Right cardiac atrium (tissue), 5 donors: ENCODE measurements at regions of chr10 and their contacts with region 1.

Region 1: DNA sequence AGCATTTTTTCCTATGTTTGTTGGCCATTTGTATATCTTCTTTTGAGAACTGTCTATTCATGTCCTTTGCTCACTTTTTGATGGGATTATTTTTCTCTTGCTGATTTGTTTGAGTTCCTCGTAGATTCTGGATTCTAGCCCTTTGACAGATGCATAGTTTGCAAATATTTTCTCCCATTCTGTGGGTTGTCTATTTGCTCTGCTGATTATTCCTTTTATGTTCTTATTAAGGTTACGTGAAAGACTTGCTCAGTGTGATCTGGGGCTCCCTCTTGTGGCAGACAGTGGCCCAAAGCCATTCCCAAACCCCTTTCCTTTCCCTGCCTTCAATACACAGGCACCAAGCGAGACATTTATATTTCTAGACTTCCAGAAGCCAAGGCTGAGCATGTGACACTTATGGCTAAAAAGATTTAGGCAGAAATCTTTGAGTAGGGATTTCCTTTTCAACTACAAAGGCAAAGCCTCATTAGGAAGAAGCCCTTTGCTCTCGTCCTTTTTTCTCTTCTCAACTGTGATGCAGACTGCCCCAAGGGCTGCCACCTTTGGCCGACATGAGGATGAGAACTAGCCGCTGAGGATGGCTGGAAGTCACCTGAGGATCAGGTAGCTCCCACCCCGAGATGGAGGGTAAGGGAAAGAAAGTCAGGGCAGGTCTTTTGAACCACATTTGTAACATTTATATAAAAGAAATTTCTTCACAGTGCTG is 23.6 kb downstream of the ST8SIA6 start:
- DNase-seq: peak; percentile 76 to 90 (median 84)
- ATAC-seq: peak; percentile 57 to 68
- H3K4me3 ChIP-seq: no peak overlapping the region
- H3K27ac ChIP-seq: no peak overlapping the region
- H3K4me1 ChIP-seq: peaks cover 6% of the 10 kb centered on the region
- H3K27me3 ChIP-seq: no peaks in the 10 kb centered on the region

Region 2: DNA sequence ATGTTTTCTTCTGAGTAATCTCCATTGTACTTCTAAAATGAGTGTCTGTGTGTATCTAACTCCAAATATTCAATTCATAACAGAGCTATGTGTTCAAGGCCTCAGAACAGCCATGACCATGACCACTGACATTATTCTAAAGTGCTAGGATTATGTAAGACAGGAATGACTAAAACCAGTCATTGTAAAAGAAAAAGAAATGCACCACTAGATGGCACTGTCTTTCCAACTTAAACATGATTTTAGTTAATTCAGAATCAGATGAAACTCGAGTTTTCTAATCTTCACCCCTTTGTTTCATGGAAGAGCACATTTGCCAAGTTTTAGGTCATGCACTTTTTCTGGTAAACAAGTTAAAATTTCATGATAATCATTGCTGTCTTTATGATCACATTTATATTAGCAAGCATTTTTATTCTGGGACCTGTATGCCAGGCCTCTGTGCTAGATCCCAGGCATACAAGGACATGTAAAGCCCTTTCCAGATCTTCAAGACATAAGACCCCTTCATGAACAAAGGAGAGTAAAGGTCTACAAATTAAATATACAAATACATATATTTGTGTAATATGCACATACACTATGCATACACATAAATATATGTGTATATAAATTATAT is 587.4 kb before region 1 on chr10:
- intact Hi-C with region 1: loop called in 3 of 4 experiments (anchors 5 to 10 kb)
- DNase-seq: no peak
- ATAC-seq: peak; percentile 65 to 79
- H3K4me3 ChIP-seq: no peak overlapping the region
- H3K27ac ChIP-seq: no peak overlapping the region
- H3K4me1 ChIP-seq: no peaks in the 10 kb centered on the region
- H3K27me3 ChIP-seq: no peaks in the 10 kb centered on the region

Region 3: DNA sequence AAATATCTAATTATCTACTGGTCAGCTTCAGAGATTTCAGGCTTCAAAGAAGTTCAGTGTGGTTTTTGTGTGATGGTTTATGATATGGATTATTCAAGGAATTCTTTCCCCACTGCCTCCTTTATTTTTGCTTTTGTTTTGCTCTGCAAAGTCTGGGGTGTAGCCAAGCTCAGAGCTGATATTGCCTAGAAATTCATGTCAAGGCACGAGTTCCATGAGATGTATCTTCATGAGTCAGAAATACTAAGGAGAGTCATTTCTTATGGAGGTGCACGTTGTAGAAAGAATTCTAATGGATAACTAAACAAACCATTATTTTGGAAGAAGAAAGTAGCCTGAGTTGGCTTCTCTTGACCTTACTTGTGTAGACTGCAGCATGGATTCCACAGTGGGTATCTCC is 165.3 kb before region 1 on chr10:
- intact Hi-C with region 1: loop called in 1 of 4 experiments (anchors 10 kb)
- DNase-seq: no peak
- ATAC-seq: no peak
- H3K4me3 ChIP-seq: no peak overlapping the region
- H3K27ac ChIP-seq: no peak overlapping the region
- H3K4me1 ChIP-seq: no peaks in the 10 kb centered on the region
- H3K27me3 ChIP-seq: no peaks in the 10 kb centered on the region